Sciatic nerve (tissue), 2 donors: ENCODE measurements at regions of chr7 and their contacts with region 1.

Region 1: GRCh38 chr7:197413-198335 is 5.3 kb downstream of the FAM20C start:
- DNase-seq: no peak
- ATAC-seq: no peak

Region 2: DNA sequence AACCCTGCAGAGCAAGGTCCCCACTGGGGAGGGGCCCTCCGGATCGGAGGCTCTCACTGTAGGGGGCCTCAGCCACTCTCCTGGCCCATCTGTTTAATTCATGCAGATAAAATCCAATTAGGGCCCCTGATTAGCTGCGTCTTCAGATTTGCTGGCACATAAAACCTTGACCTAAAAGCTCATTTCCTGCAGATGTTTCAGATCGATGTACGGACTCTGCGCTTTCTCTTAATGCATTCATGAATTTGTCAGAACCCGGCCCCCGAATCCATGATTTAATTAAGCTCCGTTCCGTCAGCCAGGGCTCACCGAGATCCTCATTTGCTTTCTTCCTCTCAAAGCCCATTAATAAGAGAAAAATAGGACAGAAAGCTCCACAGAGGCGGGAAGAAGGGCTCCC is 52.3 kb after region 1 on chr7:
- intact Hi-C with region 1: loop called (anchors 2 kb)
- DNase-seq: no peak
- ATAC-seq: no peak

Region 3: DNA sequence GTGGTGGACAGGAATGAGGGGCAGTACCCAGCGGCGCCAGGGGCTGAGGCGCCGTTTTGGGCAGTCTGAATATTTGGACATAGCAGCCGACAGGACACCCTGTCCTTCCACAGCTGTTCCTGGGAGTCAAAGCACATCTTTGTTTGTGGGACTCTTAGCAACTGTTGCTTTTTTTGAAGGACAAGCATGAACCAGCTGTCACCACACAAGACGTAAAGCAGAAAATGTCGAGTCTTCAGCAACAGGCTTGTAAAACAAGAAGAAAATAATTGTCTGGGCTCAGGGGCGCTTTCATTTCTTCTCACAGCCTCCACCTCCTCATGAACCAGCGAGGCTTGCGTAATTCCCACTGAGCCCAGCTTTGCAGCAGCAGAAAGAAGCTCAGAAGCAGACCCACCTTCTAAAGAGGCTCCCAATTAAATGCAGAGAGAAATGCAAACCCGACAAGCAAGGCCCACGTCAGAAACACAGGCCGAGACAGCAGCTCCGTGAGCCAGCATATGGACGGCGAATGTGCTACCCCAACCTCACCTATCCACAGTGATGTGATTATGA is 460.0 kb after region 1 on chr7:
- intact Hi-C with region 1: no loop called
- DNase-seq: no peak
- ATAC-seq: no peak

Region 4: GRCh38 chr7:712381-713138 is 514.9 kb after region 1 on chr7:
- intact Hi-C with region 1: no loop called
- DNase-seq: peak; percentile 46
- ATAC-seq: no peak

Region 5: DNA sequence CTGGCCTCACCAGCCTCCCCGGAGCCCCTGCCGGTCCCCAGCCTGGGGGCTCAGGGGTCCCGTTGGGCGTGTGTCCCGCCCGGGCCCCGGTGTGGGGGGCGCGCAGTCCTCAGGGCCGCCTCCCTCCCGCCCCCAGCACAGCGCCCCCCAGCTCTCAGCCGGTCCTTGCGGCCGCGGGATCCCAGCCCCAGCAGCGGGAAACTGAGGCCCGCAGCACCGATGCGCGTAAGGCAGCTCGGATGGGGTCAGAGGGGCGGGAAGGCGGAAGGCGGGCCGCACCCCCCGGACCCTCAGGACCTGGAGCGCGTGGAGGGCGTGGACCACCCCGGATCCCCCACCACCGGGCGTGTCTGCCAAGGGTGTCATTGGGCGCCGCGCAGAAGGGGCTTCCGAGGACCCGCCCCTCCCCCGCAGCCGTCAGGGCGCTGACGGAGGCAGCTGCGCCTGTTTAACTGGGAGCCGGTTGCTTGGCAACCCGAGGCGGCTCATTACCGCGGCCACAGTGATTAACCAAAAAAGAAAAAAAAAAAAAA is 1049.9 kb after region 1 on chr7:
- intact Hi-C with region 1: no loop called
- DNase-seq: no peak
- ATAC-seq: no peak